Activated CD4-positive, alpha-beta memory T cell treated with anti-CD3 and anti-CD28 coated beads for 36 hours (primary cell): ENCODE measurements at regions of chr11 and their contacts with region 1.

Region 1: DNA sequence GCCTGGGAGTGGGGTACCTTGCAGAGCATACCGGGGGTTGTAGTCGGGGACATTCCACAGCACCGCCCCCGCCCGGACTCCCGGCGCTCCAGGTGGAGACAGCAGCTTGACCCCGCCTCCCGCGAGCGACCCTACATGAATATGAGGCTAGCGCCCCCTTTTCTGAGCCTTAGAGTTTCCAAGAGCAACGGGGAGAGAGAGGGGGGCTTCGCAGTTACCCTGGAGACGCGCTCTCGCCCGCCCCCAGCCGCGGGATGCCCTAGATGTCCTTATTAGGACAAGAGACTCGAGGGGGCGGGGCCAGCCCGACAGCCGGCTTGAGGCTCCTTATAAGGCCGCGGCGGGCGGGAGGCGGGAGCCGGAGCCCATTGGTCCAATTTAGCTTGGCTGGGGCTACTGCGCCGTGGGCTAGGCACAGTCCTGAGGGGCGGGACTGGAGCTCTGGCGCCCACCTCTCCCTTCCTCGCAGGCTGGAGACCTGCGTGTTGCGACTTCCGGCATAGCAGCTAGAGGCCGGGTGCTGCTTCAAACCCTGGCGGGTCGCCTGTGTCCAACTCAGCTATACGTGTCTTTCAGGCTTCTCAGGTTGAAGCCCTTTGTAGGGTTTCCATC is 927 bp upstream of the MUS81 start:
- DNase-seq: peak; percentile 99
- H3K4me3 Mint-ChIP-seq: peak overlapping the region; percentile 98
- H3K27ac Mint-ChIP-seq: peak overlapping the region; percentile 99
- H3K4me1 Mint-ChIP-seq: peaks cover 42% of the 10 kb centered on the region
- H3K27me3 Mint-ChIP-seq: no peaks in the 10 kb centered on the region

Region 2: DNA sequence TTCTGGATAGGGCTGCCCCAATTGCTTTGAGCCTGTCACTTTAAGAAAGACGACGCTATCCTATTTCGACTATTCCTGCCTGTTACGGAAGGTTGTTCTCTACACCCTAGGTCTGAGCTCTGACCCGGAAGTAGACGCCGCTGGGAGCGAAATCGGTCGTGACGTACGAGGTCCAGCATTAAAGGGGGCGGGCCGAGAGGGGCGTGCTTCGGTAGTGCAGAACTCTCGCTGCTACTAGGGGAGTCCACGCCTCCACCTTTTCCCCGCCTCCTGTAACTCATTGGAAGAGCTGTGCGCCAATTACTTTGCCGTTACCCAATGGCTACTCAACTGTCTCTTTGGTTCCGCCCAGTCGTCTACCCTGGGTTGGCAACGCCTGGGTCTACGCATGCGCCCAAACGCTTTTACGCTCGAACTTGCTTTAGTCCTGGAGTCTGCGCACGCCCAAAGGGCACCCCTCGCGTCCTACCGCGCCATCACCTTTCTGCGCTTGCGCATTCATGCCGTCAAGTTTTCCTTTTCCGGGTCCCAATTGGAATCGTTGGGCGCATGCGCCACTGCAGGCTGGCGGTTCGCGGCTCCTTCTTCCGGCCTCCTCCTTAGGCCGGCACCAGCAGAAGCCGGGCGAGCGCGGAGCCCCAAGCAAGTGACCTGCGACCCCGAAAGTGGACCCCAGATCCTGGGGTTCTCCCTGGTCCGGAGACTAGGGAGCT is 243.9 kb before region 1 on chr11 and contains the start of gene PCNX3:
- CTCF ChIA-PET with region 1: interaction called, 3 read pairs
- POLR2A ChIA-PET with region 1: interaction called, 9 read pairs
- intact Hi-C with region 1: loop called (anchors 1 kb)
- DNase-seq: peak; percentile 100
- H3K4me3 Mint-ChIP-seq: peak within 1 kb of the TSS; percentile 96
- H3K27ac Mint-ChIP-seq: peak within 1 kb of the TSS; percentile 98
- H3K4me1 Mint-ChIP-seq: peaks cover 43% of the 10 kb centered on the region
- H3K27me3 Mint-ChIP-seq: peaks cover 3% of the 10 kb centered on the region
- total RNA-seq, gene PCNX3: 29.8 to 32.1 TPM

Region 3: DNA sequence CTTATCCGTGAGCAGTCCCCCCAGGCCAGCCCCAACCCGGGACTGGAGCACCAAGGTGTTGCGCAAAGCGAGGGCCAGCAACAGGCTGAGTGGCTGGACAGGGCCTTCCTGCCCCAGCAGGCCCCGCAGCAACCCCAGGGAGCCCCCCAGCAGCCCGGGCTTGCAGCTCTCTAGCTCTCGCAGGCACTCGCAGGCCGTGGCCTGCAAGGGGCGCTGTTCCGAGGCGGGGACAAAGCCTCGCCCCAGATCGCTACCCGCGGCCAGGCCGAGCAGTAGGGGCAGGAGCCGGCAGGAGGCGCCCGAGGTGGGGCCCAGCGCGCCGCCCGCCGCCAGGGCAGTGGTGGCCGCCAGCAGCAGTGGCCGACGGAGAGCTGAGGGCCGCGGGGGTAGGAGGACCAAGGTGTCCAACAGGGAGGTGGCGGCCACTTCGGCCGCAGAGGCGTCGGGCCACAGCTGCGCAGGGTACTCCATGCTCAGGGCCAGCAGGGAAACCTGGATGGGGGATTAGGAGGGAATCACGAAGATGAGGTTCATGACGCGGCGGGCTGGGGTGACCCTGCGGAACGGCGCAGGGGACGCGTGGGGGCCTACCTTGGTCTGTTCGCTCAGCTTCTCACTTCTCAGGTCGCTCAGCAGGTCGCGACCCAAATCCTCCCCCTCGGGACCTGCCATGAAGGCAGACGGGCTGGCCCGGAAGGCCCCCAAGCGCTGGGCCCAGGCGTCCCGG is 79.3 kb before region 1 on chr11:
- CTCF ChIA-PET with region 1: interaction called, 33 read pairs
- POLR2A ChIA-PET with region 1: interaction called, 7 read pairs
- intact Hi-C with region 1: no loop called
- DNase-seq: peak; percentile 92
- H3K4me3 Mint-ChIP-seq: peak overlapping the region; percentile 87
- H3K27ac Mint-ChIP-seq: peak overlapping the region; percentile 76
- H3K4me1 Mint-ChIP-seq: peaks cover 17% of the 10 kb centered on the region
- H3K27me3 Mint-ChIP-seq: peaks cover 4% of the 10 kb centered on the region

Region 4: DNA sequence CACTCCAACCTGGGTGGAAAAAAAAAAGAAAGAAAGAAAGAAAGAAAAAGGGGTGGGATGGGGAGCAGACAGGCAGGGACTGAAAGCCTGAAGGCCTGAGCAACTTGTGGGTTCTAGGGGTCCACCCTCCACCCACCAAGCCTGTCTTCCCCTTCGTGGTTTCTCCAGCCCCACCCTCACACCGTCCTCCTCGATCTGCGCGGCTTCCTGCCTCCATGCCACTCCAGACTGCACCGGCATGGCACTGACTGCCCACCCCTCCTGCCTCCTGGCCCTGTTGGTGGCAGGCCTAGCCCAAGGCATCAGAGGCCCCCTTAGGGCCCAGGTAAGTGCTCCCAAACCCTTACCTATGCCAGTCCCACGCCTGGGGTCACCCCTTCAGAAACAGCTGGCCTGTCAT is 20.3 kb after region 1 on chr11 and contains the start of gene CTSW:
- CTCF ChIA-PET with region 1: interaction called, 277 read pairs
- POLR2A ChIA-PET with region 1: interaction called, 11 read pairs
- intact Hi-C with region 1: no loop called
- DNase-seq: peak; percentile 54
- H3K4me3 Mint-ChIP-seq: peak within 1 kb of the TSS; percentile 31
- H3K27ac Mint-ChIP-seq: peak within 1 kb of the TSS; percentile 89
- H3K4me1 Mint-ChIP-seq: peaks cover 28% of the 10 kb centered on the region
- H3K27me3 Mint-ChIP-seq: no peaks in the 10 kb centered on the region
- total RNA-seq, gene CTSW: 11.1 to 13.2 TPM

Region 5: DNA sequence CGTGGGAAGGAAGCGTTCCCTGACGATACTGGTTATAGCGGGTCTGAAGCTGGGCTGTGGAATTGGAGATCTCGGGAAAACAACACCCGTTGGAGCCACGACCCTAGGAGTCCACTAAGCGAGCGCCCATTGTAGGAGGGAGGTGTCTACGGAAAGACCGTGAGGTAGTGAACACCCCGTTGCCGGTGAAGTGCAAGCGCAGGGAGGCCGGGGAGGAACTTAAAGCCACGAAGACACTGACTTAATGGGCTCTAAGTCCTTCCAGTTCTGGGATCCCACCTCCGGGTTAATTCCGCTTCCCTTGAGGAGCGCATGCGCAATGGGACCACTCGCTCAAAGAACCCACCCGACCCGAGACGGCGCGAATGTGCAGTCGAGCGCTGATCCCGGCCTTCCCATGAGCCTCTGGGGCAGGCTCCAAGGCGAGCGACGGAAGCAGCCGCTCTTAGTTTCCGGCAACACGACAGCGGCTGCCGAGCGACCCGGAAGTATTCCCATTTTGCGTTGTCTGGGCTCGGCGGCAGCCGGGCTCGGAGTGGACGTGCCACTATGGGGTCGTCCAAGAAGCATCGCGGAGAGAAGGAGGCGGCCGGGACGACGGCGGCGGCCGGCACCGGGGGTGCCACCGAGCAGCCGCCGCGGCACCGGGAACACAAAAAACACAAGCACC is 102.1 kb after region 1 on chr11 and contains the start of gene SART1:
- CTCF ChIA-PET with region 1: interaction called, 4 read pairs
- POLR2A ChIA-PET with region 1: no interaction called
- intact Hi-C with region 1: loop called (anchors 1 kb)
- DNase-seq: peak; percentile 98
- H3K4me3 Mint-ChIP-seq: peak within 1 kb of the TSS; percentile 95
- H3K27ac Mint-ChIP-seq: peak within 1 kb of the TSS; percentile 94
- H3K4me1 Mint-ChIP-seq: peaks cover 43% of the 10 kb centered on the region
- H3K27me3 Mint-ChIP-seq: no peaks in the 10 kb centered on the region
- total RNA-seq, gene SART1: 59.1 to 60.5 TPM

Region 6: GRCh38 chr11:66045177-66045639 is 185.9 kb after region 1 on chr11:
- CTCF ChIA-PET with region 1: interaction called, 11 read pairs
- POLR2A ChIA-PET with region 1: no interaction called
- intact Hi-C with region 1: no loop called
- DNase-seq: peak; percentile 88
- H3K4me3 Mint-ChIP-seq: peak overlapping the region; percentile 42
- H3K27ac Mint-ChIP-seq: peak overlapping the region; percentile 82
- H3K4me1 Mint-ChIP-seq: peaks cover 21% of the 10 kb centered on the region
- H3K27me3 Mint-ChIP-seq: peaks cover 5% of the 10 kb centered on the region